Vagina (tissue), 2 donors: ENCODE measurements at regions of chr13 and their contacts with region 1.

Region 1: DNA sequence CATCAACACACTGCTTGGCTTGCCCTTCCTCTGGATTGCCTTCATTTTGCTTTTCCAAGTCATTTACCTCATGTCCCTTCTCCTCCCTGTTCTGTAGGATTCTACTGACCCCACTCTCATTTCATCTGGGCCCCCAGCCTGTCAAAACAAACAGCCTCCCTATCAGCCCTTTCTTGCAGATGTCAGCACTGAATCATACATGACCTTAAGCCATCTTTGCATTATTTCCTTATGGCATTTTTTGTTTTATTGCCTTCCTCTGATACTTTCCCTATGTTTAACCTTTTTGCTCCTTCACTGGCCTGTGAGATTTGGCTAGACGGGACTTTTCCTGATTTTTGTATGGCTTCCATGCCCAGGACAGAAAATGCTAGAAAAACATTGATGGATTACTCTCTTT is 8.7 kb downstream of the LRCH1 start:
- DNase-seq: no peak
- H3K4me3 ChIP-seq: no peak overlapping the region
- H3K27ac ChIP-seq: no peak overlapping the region
- H3K4me1 ChIP-seq: peaks cover 38% of the 10 kb centered on the region
- H3K27me3 ChIP-seq: no peaks in the 10 kb centered on the region
- CTCF ChIP-seq: no peak
- POLR2A ChIP-seq: no peak

Region 2: GRCh38 chr13:44703371-44703770 is 1858.3 kb before region 1 on chr13:
- intact Hi-C with region 1: loop called (anchors 5 kb)
- DNase-seq: no peak
- H3K4me3 ChIP-seq: no peak overlapping the region
- H3K27ac ChIP-seq: no peak overlapping the region
- H3K4me1 ChIP-seq: no peaks in the 10 kb centered on the region
- H3K27me3 ChIP-seq: no peaks in the 10 kb centered on the region
- CTCF ChIP-seq: no peak
- POLR2A ChIP-seq: no peak

Region 3: DNA sequence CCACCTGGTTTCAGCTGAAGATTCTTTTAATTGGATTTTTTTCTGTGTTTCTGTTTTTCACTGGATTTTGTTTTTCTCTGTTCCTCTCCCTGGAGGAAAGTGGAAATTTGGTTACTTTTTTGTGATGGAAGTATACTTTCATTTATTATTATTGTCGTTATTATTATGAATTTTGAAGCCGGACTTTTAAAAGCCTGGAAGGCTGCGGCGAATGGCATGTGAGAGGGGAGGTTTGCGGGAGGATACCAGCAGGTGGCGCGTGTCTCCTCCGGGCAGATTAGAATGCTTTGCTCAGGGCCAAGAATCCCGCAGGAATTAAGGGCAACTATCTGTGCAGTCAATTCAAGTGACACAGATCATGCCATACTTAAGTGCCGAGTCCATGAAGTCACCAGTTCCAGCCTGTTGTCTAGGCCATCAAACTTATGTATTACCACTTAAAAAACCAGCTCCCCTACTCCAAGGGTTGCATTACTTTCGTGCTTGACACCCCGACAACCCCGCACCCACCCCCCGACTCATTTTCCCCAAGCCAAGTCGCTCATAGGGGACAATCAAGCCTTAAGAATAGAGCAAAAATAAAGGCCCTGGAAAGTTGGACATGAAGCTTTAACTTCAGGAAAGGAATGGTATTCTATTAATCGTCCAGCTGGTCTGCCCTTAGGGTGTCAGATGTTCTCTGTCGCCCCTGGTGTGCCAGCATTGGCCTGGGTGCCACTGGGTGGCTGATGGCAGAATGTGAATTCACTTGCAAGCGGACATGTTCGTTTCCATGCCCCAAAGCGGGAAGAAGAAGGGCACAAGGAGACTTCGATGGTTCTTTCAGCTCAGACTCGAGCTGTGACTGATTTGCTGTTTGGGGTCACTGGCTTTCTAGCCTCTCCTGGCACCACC is 10.0 kb before region 1 on chr13:
- intact Hi-C with region 1: no loop called
- DNase-seq: no peak
- H3K4me3 ChIP-seq: peak overlapping the region; percentile 74 to 99
- H3K27ac ChIP-seq: peak overlapping the region; percentile 97
- H3K4me1 ChIP-seq: peaks cover 27% of the 10 kb centered on the region
- H3K27me3 ChIP-seq: no peaks in the 10 kb centered on the region
- CTCF ChIP-seq: peak; percentile 37 to 84 (median 82)
- POLR2A ChIP-seq: no peak